ENCODE measurements at regions of chr4 and their contacts with region 1.

Region 1: GRCh38 chr4:78864405-78865024 is 74.7 kb downstream of the PAQR3 start:
- DNase-seq: peak; percentile 51 to 68 (median 62)
- H3K4me3 ChIP-seq: no peak overlapping the region
- H3K4me3 Mint-ChIP-seq: no peak overlapping the region
- H3K27ac ChIP-seq: no peak overlapping the region
- H3K27ac Mint-ChIP-seq: no peak overlapping the region
- H3K4me1 ChIP-seq: no peaks in the 10 kb centered on the region
- H3K4me1 Mint-ChIP-seq: peaks cover 2% of the 10 kb centered on the region
- H3K27me3 ChIP-seq: no peaks in the 10 kb centered on the region
- H3K27me3 Mint-ChIP-seq: no peaks in the 10 kb centered on the region
- CTCF ChIP-seq: peak; percentile 85

Region 2: DNA sequence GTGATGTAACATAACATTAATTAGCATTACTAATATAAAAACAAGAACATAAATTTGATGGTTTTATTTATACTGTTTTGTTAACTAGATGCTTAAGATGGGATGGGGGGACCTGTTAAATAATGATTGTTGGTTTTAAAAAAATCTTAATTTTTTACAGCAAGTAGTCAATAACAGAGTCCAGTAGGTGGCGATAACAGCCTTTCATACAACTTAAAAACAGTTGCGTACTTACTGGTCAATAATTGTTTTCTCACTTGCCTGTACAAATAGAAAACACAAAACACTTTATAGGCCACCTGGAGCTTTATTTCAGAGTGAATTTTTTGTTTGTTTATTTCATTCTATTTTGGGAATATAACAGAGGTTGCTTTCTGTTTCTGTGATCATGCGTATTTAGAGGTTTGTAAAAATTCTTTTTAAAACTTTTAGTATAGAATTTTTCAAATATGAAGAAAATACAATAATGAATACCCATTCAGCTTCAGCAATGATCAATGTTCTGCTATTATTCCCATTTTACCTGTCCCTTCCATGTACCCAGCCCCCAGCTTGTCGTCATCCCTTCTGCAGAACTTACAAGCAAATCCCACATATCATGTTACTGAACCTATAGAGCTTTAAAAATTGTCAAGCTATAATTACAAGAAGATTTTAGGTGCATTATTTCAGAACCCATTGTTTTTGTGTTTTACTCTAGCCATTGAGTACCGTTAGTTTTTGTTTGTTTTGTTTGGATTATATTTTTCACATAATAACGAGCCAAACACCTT is 904.8 kb before region 1 on chr4:
- intact Hi-C with region 1: loop called in 1 of 2 experiments (anchors 10 kb)
- DNase-seq: peak; percentile 2 to 8 (median 7)
- H3K4me3 ChIP-seq: no peak overlapping the region
- H3K4me3 Mint-ChIP-seq: no peak overlapping the region
- H3K27ac ChIP-seq: no peak overlapping the region
- H3K27ac Mint-ChIP-seq: no peak overlapping the region
- H3K4me1 ChIP-seq: no peaks in the 10 kb centered on the region
- H3K4me1 Mint-ChIP-seq: no peaks in the 10 kb centered on the region
- H3K27me3 ChIP-seq: no peaks in the 10 kb centered on the region
- H3K27me3 Mint-ChIP-seq: peaks cover 0 to 3% (median 0%) of the 10 kb centered on the region in 3 donors
- CTCF ChIP-seq: peak; percentile 84

Region 3: GRCh38 chr4:78612398-78613178 is 251.9 kb before region 1 on chr4:
- intact Hi-C with region 1: loop called (anchors 5 kb)
- DNase-seq: peak; percentile 34 to 55 (median 46)
- H3K4me3 ChIP-seq: no peak overlapping the region
- H3K4me3 Mint-ChIP-seq: no peak overlapping the region
- H3K27ac ChIP-seq: no peak overlapping the region
- H3K27ac Mint-ChIP-seq: no peak overlapping the region
- H3K4me1 ChIP-seq: peaks cover 3 to 26% of the 10 kb centered on the region in 2 donors
- H3K4me1 Mint-ChIP-seq: peaks cover 31% of the 10 kb centered on the region
- H3K27me3 ChIP-seq: no peaks in the 10 kb centered on the region
- H3K27me3 Mint-ChIP-seq: no peaks in the 10 kb centered on the region
- CTCF ChIP-seq: peak; percentile 77

Region 4: DNA sequence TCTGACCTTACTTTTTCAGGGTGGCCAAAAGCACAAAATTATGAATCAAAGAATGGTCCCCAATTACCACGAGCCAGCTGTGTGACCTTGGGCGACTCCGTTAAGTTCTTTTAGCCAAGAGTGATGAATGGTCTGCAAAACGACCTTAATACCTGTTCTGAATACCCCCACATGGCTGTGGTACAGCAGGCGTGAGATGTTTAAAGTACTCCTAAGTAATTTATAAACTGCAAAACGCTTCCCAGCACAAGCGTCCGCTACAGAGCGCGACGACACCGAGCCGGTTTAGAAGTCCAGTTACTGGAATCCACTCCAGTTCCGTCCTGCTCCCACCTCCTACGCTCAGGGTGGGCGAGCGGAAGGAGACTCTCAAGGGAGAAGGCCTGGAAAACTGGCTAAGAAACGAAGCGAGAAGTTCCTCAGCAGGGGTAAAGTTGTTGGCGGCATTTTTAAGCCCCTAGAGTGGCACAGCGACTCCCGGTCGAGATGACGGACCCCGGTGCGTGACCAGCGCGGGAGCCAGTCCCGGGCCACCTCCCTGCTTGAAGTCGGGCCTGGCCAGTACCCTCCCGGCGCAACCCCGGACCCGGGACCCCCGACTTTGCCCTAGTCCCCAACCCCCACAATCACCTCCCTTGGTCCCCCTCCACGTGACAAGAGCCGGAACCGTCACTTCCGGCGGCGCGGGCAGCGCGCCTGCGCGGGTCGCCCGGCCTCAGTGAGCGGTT is 89.0 kb before region 1 on chr4:
- intact Hi-C with region 1: loop called in 1 of 2 experiments (anchors 10 kb)
- DNase-seq: peak; percentile 81 to 84 (median 83)
- H3K4me3 ChIP-seq: peak overlapping the region; percentile 78 to 99 (median 90)
- H3K4me3 Mint-ChIP-seq: peak overlapping the region; percentile 93 to 99
- H3K27ac ChIP-seq: peak overlapping the region; percentile 98 to 99
- H3K27ac Mint-ChIP-seq: peak overlapping the region; percentile 96 to 99 (median 98)
- H3K4me1 ChIP-seq: peaks cover 23 to 48% of the 10 kb centered on the region in 2 donors
- H3K4me1 Mint-ChIP-seq: peaks cover 15% of the 10 kb centered on the region
- H3K27me3 ChIP-seq: no peaks in the 10 kb centered on the region
- H3K27me3 Mint-ChIP-seq: no peaks in the 10 kb centered on the region
- CTCF ChIP-seq: no peak